Dorsolateral prefrontal cortex (tissue), 120 donors: ENCODE measurements at regions of chr11 and their contacts with region 1.

Region 1: DNA sequence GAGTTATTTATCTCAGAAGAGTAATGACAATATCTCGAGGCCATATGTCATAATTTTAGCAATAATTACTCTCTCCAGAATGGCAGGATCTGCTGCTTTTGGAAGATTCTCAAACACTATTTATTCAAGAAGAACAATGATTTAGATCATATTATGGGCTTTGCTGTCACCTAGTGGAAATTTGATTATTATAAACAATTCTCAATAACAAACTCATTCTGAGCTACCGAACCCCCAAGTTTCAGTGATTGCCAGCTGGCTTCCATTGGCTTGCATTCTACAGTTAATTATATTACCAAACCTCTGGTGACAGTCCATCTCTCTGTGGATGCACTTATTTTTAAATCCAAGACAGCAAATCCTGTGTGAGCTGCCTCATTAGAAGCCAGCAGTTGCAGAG is 27.9 kb upstream of the SLC36A4 start:
- DNase-seq: no peak
- H3K4me3 ChIP-seq: no peak overlapping the region
- H3K27ac ChIP-seq: no peak overlapping the region
- H3K27me3 ChIP-seq: peaks cover 0 to 3% (median 0%) of the 10 kb centered on the region in 45 donors
- CTCF ChIP-seq: peak in 55 of 56 donors; percentile 35 to 80 (median 60)

Region 2: DNA sequence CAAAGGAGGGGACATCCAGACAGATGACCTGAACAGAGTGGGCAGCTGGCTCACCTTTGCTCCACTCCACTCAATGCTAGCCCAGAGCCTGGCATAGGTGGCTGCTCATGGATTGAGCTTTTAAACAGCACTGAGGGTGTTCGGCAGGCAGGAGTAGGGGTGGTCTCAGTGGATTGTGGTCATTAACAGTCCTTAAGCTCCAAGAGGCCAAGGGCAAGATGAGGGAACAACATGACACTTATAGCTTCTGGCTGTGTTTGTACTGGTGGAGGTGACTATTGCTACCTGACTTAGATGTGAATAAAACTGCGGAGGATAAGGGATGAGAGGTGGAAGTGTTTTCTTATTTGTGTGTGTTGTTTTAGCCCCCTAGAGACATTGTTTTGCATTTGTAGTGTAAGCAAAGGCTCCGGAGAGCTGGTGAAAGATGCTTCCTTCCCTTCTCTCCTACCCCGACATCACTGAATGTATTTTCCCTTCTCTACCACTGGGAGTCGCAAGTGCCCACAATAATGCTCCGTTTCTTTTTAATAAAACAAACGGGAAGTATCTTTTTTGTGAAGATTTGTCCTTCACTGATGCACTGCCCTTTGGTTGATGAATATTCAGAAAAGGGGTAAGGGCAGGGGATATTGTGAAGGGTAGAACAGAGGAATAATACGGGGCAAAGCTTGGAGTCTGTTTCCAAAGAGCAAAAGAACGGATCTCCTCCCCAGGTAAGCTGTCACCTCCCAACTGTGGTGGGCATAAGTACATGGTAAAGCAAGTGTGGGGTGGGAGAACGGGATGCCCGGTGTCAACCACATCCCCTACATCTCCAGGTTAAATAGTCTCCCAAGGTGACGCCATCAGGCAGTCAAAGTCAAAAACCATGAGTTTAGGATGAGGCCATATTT is 283.7 kb before region 1 on chr11:
- intact Hi-C with region 1: loop called in 1 of 2 experiments (anchors 5 kb)
- DNase-seq: no peak
- H3K4me3 ChIP-seq: no peak overlapping the region
- H3K27ac ChIP-seq: no peak overlapping the region
- H3K27me3 ChIP-seq: no peaks in the 10 kb centered on the region
- CTCF ChIP-seq: peak; percentile 36 to 74 (median 60)

Region 3: DNA sequence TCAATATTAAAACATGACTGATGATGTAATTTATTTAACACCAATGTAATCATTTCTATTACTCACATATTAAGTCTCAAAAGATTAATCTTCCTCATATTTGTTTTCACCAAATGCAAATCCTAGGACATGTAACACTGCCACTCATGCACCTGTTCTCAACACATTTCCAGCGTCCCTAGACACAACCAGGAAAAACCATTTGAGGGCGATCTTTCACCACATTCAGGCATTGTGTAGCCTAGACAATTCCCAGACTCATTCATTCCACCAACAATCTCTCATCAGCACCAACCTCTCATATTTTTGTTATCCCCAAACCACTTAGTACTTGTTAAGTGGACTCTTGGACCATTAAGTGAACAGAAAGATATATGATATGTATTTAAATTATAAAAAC is 94.0 kb before region 1 on chr11:
- intact Hi-C with region 1: no loop called
- DNase-seq: no peak
- H3K4me3 ChIP-seq: no peak overlapping the region
- H3K27ac ChIP-seq: no peak overlapping the region
- H3K27me3 ChIP-seq: peaks cover 0 to 8% (median 0%) of the 10 kb centered on the region in 45 donors
- CTCF ChIP-seq: no peak

Region 4: GRCh38 chr11:93169950-93170561 is 55.6 kb before region 1 on chr11:
- intact Hi-C with region 1: no loop called
- DNase-seq: no peak
- H3K4me3 ChIP-seq: no peak overlapping the region
- H3K27ac ChIP-seq: no peak overlapping the region
- H3K27me3 ChIP-seq: no peaks in the 10 kb centered on the region
- CTCF ChIP-seq: peak in 50 of 56 donors; percentile 6 to 64 (median 41)